Activated T-helper 1 cell treated with anti-CD3 and anti-CD28 coated beads, Interleukin-12 subunit alpha, Interleukin-12 subunit beta, Interleukin-2, Interleukin-4 antibody, amounts not matched to agents 30 ng/mL and 10 ng/mL and 1 ng/mL, durations not matched to agents 14 hours and 24 hours and 36 hours (primary cell): ENCODE measurements at regions of chr19 and their contacts with region 1.

Region 1: DNA sequence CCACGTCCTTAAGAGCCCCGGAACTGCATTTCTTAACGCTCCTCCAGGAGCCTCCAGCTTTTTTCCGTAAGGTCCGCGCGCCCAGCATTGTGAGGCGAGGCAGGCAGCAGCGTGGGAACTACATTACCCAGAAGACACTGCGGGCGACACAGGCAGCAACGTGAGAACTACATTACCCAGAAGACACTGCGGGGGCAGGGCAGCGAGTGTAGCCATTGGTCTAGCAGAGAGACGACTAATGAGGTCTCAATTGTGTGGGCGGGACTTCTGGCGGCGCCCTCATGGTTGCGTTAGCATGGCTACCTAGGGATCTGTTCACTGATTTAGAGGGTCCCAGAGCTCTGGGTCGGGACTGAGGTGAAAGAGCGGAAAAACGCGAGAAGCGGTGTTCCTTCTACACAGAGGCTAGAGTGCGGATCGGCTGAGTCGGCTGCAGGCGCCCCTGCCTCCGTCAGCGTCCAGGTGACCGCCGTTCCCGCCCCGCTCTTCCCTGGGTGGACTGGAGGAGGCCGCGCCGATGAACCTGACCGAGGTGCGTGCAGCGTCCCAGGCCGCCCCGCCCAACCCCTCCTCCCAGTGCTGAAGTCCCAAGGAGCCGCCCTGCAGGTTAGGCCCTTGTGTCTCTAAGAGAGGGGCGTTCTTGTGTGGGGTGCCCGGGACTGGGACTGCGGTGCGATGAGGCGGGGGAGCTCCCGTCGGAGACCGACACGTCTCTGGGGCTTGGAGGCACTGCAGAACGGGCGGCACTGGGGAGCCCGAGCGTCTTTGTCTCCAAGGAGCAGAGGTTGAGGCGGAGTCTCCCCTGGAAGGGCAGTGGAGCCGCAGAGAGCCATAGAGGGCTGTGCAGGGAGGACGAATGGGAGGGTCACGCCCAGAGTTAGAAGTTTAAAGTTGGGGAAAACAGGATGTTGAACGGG is at the start of gene ZNF749:
- DNase-seq: peak; percentile 95
- H3K4me3 Mint-ChIP-seq: peak within 1 kb of the TSS; percentile 93
- H3K27ac Mint-ChIP-seq: peak within 1 kb of the TSS; percentile 95
- H3K4me1 Mint-ChIP-seq: peaks cover 23% of the 10 kb centered on the region
- H3K27me3 Mint-ChIP-seq: no peaks in the 10 kb centered on the region
- total RNA-seq, gene ZNF749: 21.5 and 22.0 TPM in 2 replicates

Region 2: DNA sequence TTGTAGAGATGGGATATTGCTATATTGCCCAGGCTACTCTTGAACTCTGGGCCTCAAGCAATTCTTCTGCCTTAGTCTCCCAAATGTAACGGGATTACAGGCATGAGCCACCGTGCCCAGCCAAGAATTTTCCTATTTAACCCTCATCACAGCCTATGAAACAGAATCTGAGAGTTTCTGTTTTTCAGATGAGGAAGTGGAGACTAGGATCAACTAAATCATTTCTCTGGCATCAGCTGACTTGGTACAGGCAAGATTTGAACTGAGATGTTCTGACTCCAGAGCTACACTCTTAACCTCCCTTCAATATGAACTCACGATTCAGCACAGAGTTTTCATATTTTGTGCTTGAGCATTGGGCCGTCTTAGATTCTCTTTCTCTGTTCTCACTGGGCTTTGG is 146.9 kb before region 1 on chr19:
- intact Hi-C with region 1: no loop called
- DNase-seq: no peak
- H3K4me3 Mint-ChIP-seq: no peak overlapping the region
- H3K27ac Mint-ChIP-seq: no peak overlapping the region
- H3K4me1 Mint-ChIP-seq: peaks cover 9% of the 10 kb centered on the region
- H3K27me3 Mint-ChIP-seq: no peaks in the 10 kb centered on the region

Region 3: GRCh38 chr19:57320180-57321084 is 114.9 kb before region 1 on chr19 and contains the start of gene ZNF543:
- intact Hi-C with region 1: loop called (anchors 1 kb)
- DNase-seq: peak; percentile 90
- H3K4me3 Mint-ChIP-seq: peak within 1 kb of the TSS; percentile 89
- H3K27ac Mint-ChIP-seq: peak within 1 kb of the TSS; percentile 97
- H3K4me1 Mint-ChIP-seq: peaks cover 28% of the 10 kb centered on the region
- H3K27me3 Mint-ChIP-seq: peaks cover 14% of the 10 kb centered on the region
- total RNA-seq, gene ZNF543: 5.1 and 5.4 TPM in 2 replicates

Region 4: DNA sequence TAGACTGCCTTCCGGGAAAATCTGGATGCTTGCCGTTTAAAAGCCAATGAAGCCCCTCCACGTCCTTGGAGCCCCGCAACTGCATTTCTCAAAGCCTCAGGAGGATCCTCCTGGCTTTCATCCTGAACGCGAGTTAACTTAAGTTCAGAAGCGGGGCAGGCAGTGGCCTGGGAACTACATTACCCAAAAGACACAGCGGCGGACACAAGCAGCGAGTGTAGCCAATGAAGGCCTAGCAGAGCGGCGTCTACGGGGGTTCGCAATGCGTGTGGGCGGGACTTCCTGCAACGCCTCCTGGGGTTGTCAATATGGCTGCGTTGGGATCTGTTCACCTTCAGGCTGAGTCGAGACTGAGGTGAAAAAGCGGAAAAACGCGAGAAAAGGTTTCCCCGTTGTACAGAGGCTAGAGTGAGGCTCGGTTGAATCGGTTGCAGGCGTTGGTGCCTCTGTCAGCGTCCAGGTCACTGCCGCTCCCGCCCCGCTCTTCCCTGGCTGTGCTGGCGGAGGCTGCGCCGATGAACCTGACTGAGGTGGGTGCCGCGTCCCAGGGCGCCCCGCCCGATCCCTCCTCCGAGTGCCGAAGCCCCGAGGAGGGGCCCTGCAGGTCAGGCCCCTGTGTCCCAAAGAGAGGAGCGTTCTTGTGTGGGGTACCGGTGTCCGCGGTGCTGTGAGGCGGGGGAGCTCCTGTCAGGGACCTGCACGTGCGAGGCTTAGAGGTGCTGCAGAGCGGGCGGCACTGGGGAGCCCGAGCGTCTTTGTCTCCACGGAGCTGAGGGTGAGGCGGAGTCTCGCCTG is 24.2 kb before region 1 on chr19 and contains the start of gene ZNF17:
- intact Hi-C with region 1: loop called (anchors 1 kb)
- DNase-seq: peak; percentile 87
- H3K4me3 Mint-ChIP-seq: peak within 1 kb of the TSS; percentile 95
- H3K27ac Mint-ChIP-seq: peak within 1 kb of the TSS; percentile 81
- H3K4me1 Mint-ChIP-seq: peaks cover 18% of the 10 kb centered on the region
- H3K27me3 Mint-ChIP-seq: no peaks in the 10 kb centered on the region
- total RNA-seq, gene ZNF17: 7.9 and 11.0 TPM in 2 replicates

Region 5: DNA sequence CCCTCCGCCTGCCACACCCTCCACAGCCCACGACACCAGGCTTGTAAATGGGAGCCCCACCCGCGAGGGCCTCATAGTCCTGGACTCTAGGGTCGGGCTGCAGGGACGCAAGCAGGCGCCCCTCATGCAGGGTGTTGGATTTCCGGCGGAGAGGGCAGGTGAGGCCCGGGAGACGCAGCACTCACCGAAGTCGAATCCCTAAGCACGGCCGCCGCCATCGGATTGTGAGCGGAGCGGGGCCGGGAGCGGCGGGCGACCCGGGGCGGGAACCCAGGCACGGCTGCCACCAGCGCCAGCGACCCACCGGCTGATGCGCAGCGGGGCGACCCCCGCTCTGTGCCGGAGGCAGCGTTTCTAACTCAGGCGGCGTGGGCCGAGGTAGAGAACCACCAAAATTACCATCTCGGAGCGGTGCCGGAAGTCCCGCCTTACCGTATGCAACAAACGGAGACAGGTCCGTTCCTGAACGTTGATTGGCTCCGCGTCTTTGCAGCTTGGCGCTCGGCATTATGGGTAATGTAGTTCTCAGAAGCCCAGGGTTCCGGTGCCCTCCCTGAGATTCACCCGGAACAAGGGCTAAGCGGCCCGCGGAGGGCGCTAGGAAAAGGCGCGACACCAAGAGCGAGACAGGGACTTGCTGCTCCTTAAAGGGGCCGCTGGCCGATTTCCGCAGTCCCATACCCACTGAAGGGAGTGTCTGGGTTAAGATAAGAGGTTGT is 143.3 kb after region 1 on chr19 and contains the start of gene ZNF416:
- intact Hi-C with region 1: loop called (anchors 1 kb)
- DNase-seq: peak; percentile 94
- H3K4me3 Mint-ChIP-seq: peak within 1 kb of the TSS; percentile 80
- H3K27ac Mint-ChIP-seq: peak within 1 kb of the TSS; percentile 74
- H3K4me1 Mint-ChIP-seq: peaks cover 18% of the 10 kb centered on the region
- H3K27me3 Mint-ChIP-seq: no peaks in the 10 kb centered on the region
- total RNA-seq, gene ZNF416: 3.2 and 3.7 TPM in 2 replicates

Region 6: DNA sequence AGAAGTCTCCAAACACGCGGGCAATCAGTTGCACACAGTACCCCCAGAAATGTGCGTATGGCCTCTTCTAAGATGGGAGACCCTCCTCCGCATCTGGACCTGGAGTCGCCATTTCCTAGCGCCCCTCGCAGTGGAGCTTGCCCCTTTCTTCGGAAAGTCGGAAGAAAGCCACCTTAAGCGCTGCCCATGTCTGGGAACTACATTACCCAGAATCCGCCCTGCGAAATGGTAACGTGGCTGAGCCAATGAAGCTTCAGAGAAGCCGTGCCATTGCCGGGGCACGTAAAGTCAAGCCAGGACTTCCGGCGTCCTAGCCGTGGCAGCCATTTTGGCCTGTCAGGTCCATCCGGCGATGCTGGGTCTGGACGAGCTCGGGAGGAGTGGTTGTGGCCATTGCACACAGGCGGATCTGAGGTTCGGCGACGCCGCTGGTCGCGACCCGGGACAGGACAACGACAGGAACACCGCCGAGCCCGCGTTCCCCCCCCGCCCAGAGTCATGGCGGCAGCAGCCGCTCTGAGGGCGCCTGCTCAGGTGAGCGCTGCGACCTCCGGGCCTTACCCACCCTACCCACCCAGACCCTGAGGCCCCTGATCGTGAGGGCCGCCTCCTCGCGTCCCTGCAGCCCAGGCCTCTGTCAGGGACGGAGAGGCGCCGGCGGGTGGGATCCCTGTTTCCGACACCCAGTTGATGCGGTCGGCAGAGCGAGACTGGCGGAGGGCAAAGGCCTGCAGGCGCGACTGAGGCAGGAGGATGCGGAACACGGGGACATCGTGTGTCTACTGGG is 334.2 kb after region 1 on chr19 and contains the start of gene ZNF586:
- intact Hi-C with region 1: loop called (anchors 1 kb)
- DNase-seq: peak; percentile 85
- H3K4me3 Mint-ChIP-seq: peak within 1 kb of the TSS; percentile 94
- H3K27ac Mint-ChIP-seq: peak within 1 kb of the TSS; percentile 89
- H3K4me1 Mint-ChIP-seq: peaks cover 24% of the 10 kb centered on the region
- H3K27me3 Mint-ChIP-seq: no peaks in the 10 kb centered on the region
- total RNA-seq, gene ZNF586: 13.6 and 13.8 TPM in 2 replicates

Region 7: DNA sequence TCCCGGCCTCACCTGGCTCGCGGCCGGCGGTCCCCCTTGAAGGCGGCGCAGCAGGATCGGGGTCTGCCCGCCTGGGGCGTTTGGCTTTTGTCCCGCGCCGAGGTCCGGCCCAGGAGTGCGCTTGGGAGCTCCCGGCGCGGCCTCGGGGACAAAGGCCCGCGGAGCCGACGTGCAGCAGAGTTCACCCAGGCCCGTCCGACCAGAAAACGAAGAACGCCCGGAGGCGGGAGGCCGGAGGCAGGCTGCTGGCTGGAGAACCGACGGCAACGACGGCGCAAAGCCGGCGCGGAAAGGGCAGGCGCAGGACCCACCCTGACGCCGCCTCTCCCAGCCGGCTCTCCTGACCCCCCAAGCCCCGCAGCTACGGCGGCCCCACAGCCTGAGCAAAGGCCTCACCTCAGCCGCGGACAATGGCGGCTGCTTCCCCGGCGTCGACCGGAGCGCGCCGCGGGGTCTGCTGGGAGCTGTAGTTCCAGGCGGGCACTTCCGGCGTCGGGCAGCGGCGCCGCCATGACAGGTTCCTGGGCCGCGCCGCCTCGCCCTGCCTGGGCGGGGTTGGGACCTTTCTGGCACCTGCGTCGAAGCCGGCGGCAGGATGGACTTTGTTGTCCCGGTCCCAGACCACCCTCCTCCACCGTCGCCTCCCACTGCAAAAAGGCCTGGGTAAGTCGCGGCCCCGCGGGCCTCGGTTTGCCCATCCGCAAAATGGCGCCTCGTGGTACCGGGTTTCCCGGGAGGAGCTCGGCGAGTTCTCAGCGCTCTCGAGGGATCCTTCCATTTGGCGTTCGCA is 567.3 kb after region 1 on chr19 and contains the start of gene ZNF606:
- intact Hi-C with region 1: loop called (anchors 1 kb)
- DNase-seq: peak; percentile 80
- H3K4me3 Mint-ChIP-seq: peak within 1 kb of the TSS; percentile 84
- H3K27ac Mint-ChIP-seq: peak within 1 kb of the TSS; percentile 67
- H3K4me1 Mint-ChIP-seq: peaks cover 20% of the 10 kb centered on the region
- H3K27me3 Mint-ChIP-seq: no peaks in the 10 kb centered on the region
- total RNA-seq, gene ZNF606: 6.3 and 6.4 TPM in 2 replicates